ENCODE measurements at regions of chr2 and their contacts with region 1.

Region 1: DNA sequence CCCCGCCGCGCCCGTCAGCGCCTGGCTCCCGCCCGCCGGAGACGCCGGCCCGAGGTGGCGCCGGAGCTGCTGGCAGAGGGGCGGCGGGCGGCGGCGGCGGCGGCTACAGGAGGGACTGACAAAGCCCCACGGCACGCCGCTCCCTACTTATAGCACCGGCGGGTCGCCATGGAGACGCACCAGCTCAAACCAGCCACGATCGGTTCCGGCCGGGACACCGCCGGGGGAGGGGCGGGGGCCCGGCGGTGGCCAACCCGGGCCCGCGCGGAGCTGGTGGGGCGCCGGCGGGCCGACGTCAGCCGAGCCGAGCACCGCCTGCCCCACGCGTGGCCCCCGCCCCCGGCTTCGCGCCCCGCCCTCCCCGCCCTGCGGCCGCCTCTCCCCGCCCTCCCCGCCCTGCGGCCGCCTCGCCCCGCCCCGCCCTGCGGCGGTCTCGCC is at the start of gene ODC1:
- DNase-seq: peak; percentile 96 to 99 (median 98)
- ATAC-seq: peak; percentile 81
- H3K4me3 ChIP-seq: peak within 1 kb of the TSS; percentile 63
- H3K4me3 Mint-ChIP-seq: peak within 1 kb of the TSS; percentile 86
- H3K27ac ChIP-seq: peak within 1 kb of the TSS; percentile 84 to 86
- H3K27ac Mint-ChIP-seq: peak within 1 kb of the TSS; percentile 87
- H3K4me1 ChIP-seq: peaks cover 47% of the 10 kb centered on the region
- H3K4me1 Mint-ChIP-seq: peaks cover 47% of the 10 kb centered on the region
- H3K27me3 ChIP-seq: no peaks in the 10 kb centered on the region
- H3K27me3 Mint-ChIP-seq: no peaks in the 10 kb centered on the region
- CTCF ChIP-seq: no peak
- total RNA-seq, gene ODC1: 162 to 164 TPM

Region 2: GRCh38 chr2:8836971-8837794 is 1611.0 kb before region 1 on chr2 and contains the start of gene KIDINS220:
- CTCF ChIA-PET with region 1: no interaction called
- POLR2A ChIA-PET with region 1: no interaction called
- intact Hi-C with region 1: loop called in 1 of 2 experiments (anchors 5 kb)
- DNase-seq: peak; percentile 79 to 93 (median 84)
- ATAC-seq: peak; percentile 96
- H3K4me3 ChIP-seq: peak within 1 kb of the TSS; percentile 89
- H3K4me3 Mint-ChIP-seq: peak within 1 kb of the TSS; percentile 100
- H3K27ac ChIP-seq: peak within 1 kb of the TSS in 1 of 2 donors; percentile 48
- H3K27ac Mint-ChIP-seq: peak within 1 kb of the TSS; percentile 84
- H3K4me1 ChIP-seq: peaks cover 40% of the 10 kb centered on the region
- H3K4me1 Mint-ChIP-seq: peaks cover 49% of the 10 kb centered on the region
- H3K27me3 ChIP-seq: no peaks in the 10 kb centered on the region
- H3K27me3 Mint-ChIP-seq: no peaks in the 10 kb centered on the region
- CTCF ChIP-seq: no peak
- total RNA-seq, gene KIDINS220: 29.3 to 31.4 TPM

Region 3: GRCh38 chr2:9813312-9814133 is 634.7 kb before region 1 on chr2:
- CTCF ChIA-PET with region 1: no interaction called
- POLR2A ChIA-PET with region 1: no interaction called
- intact Hi-C with region 1: loop called in 1 of 2 experiments (anchors 10 kb)
- DNase-seq: peak; percentile 40 to 82 (median 60)
- ATAC-seq: peak; percentile 83
- H3K4me3 ChIP-seq: no peak overlapping the region
- H3K4me3 Mint-ChIP-seq: no peak overlapping the region
- H3K27ac ChIP-seq: no peak overlapping the region
- H3K27ac Mint-ChIP-seq: no peak overlapping the region
- H3K4me1 ChIP-seq: peaks cover 10% of the 10 kb centered on the region
- H3K4me1 Mint-ChIP-seq: peaks cover 25% of the 10 kb centered on the region
- H3K27me3 ChIP-seq: no peaks in the 10 kb centered on the region
- H3K27me3 Mint-ChIP-seq: peaks cover 4% of the 10 kb centered on the region
- CTCF ChIP-seq: peak; percentile 86

Region 4: DNA sequence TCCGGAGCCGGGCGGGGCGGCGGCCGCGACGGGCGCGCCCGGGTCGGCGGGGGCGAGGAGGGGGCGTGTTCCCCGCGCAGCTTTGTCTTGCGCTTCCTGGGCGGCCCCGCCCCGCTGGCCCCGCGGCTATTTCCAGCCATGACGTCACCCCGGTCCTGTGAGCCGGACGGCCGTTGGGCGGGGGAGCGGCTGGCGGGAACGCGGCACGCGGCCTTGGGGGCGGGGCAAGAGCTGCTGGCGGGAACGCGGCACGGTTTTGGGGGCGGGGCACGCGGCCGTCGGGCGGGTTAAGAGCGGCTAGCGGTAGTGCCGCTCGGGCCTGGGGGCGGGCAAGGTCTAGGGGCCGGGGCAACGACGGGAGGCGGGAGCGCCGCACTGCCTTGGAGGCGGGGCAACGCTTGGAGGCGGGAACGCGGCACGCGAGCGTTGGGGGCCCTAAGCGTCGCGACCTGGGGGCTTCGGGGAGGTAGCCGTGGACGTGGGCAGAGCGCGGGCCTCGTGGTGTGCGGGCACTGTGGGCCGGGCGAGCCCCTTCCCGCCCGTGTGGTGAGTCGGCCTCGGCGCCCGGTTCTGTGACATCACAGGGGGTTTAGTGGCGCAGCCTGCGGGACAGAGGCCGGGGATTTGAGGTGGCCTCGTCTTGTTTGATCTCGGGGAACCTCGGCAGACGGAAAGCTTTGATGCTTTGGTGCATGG is 404.2 kb before region 1 on chr2:
- CTCF ChIA-PET with region 1: no interaction called
- POLR2A ChIA-PET with region 1: interaction called, 23 read pairs
- intact Hi-C with region 1: no loop called
- DNase-seq: peak; percentile 79 to 97 (median 88)
- ATAC-seq: peak; percentile 63
- H3K4me3 ChIP-seq: peak overlapping the region; percentile 52
- H3K4me3 Mint-ChIP-seq: peak overlapping the region; percentile 81
- H3K27ac ChIP-seq: peak overlapping the region; percentile 77 to 79
- H3K27ac Mint-ChIP-seq: peak overlapping the region; percentile 89
- H3K4me1 ChIP-seq: peaks cover 29% of the 10 kb centered on the region
- H3K4me1 Mint-ChIP-seq: peaks cover 31% of the 10 kb centered on the region
- H3K27me3 ChIP-seq: no peaks in the 10 kb centered on the region
- H3K27me3 Mint-ChIP-seq: no peaks in the 10 kb centered on the region
- CTCF ChIP-seq: no peak

Region 5: GRCh38 chr2:10331027-10331701 is 117.1 kb before region 1 on chr2:
- CTCF ChIA-PET with region 1: no interaction called
- POLR2A ChIA-PET with region 1: interaction called, 7 read pairs
- intact Hi-C with region 1: loop called in 1 of 2 experiments (anchors 1 kb)
- DNase-seq: peak; percentile 54 to 87 (median 74)
- ATAC-seq: peak; percentile 65
- H3K4me3 ChIP-seq: peak overlapping the region; percentile 74
- H3K4me3 Mint-ChIP-seq: peak overlapping the region; percentile 91
- H3K27ac ChIP-seq: peak overlapping the region; percentile 90 to 95
- H3K27ac Mint-ChIP-seq: peak overlapping the region; percentile 94
- H3K4me1 ChIP-seq: peaks cover 77% of the 10 kb centered on the region
- H3K4me1 Mint-ChIP-seq: peaks cover 89% of the 10 kb centered on the region
- H3K27me3 ChIP-seq: no peaks in the 10 kb centered on the region
- H3K27me3 Mint-ChIP-seq: no peaks in the 10 kb centered on the region
- CTCF ChIP-seq: no peak

Region 6: GRCh38 chr2:10493636-10494281 is 45.5 kb after region 1 on chr2:
- CTCF ChIA-PET with region 1: interaction called, 3 read pairs
- POLR2A ChIA-PET with region 1: interaction called, 74 read pairs
- intact Hi-C with region 1: loop called in 1 of 2 experiments (anchors 2 kb)
- DNase-seq: peak; percentile 59 to 94 (median 74)
- ATAC-seq: peak; percentile 91
- H3K4me3 ChIP-seq: no peak overlapping the region
- H3K4me3 Mint-ChIP-seq: peak overlapping the region; percentile 58
- H3K27ac ChIP-seq: peak overlapping the region in 1 of 2 donors; percentile 55
- H3K27ac Mint-ChIP-seq: peak overlapping the region; percentile 88
- H3K4me1 ChIP-seq: peaks cover 24% of the 10 kb centered on the region
- H3K4me1 Mint-ChIP-seq: peaks cover 41% of the 10 kb centered on the region
- H3K27me3 ChIP-seq: peaks cover 0 to 4% of the 10 kb centered on the region in 2 experiments
- H3K27me3 Mint-ChIP-seq: peaks cover 13% of the 10 kb centered on the region
- CTCF ChIP-seq: no peak

Region 7: DNA sequence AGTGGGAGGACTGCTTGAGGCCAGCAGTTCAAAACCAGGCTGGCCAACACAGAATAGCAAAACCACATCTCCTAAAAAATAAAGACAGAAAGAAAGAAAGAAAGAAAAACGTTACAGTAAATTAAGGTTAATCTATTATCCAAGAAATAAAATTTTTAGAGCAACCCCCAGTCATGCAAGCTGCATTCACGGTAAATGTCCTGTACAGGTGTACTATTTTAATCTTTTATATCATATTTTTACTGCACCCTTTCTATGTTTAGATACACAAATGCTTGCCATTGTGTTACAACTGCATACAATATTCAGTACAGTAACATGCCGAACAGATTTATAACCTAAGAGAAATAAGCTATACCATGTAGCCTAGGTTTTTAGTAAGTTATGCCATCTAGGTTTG is 358.3 kb after region 1 on chr2:
- CTCF ChIA-PET with region 1: no interaction called
- POLR2A ChIA-PET with region 1: no interaction called
- intact Hi-C with region 1: loop called in 1 of 2 experiments (anchors 5 kb)
- DNase-seq: no peak
- ATAC-seq: no peak
- H3K4me3 ChIP-seq: no peak overlapping the region
- H3K4me3 Mint-ChIP-seq: no peak overlapping the region
- H3K27ac ChIP-seq: no peak overlapping the region
- H3K27ac Mint-ChIP-seq: no peak overlapping the region
- H3K4me1 ChIP-seq: peaks cover 25% of the 10 kb centered on the region
- H3K4me1 Mint-ChIP-seq: peaks cover 49% of the 10 kb centered on the region
- H3K27me3 ChIP-seq: no peaks in the 10 kb centered on the region
- H3K27me3 Mint-ChIP-seq: no peaks in the 10 kb centered on the region
- CTCF ChIP-seq: no peak

Measured in CD4-positive, alpha-beta T cell (primary cell).